ENCODE measurements at regions of chr1 and their contacts with region 1.

Region 1: GRCh38 chr1:50949286-50949982 is 10.6 kb downstream of the FAF1 start:
- DNase-seq: no peak
- ATAC-seq: no peak
- H3K4me3 ChIP-seq: no peak overlapping the region
- H3K27ac ChIP-seq: no peak overlapping the region
- H3K4me1 ChIP-seq: peaks cover 6 to 23% of the 10 kb centered on the region in 2 donors
- H3K27me3 ChIP-seq: no peaks in the 10 kb centered on the region
- CTCF ChIP-seq: no peak
- POLR2A ChIP-seq: no peak

Region 2: DNA sequence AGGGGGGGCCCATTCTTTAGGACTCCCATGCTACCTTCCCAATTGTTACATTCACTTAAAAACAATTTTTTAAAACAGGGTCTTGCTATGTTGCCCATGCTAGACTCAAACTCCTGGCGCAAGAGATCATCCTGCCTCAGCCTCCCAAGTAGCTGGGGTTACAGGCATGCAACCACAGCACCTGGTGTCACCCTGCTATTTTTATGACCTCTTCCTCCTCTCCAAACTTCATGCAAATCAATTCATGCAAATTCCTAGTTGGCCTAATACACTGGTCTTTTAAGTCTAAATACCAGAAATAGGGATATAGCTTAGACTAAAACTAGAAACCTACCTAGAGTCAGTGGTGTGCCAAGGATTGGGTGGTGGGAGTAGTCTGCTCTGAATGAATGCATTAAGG is 50.7 kb after region 1 on chr1:
- in situ Hi-C with region 1: loop called in 1 of 4 experiments (anchors 5 kb)
- intact Hi-C with region 1: no loop called
- DNase-seq: no peak
- ATAC-seq: no peak
- H3K4me3 ChIP-seq: no peak overlapping the region
- H3K27ac ChIP-seq: no peak overlapping the region
- H3K4me1 ChIP-seq: no peaks in the 10 kb centered on the region
- H3K27me3 ChIP-seq: no peaks in the 10 kb centered on the region
- CTCF ChIP-seq: no peak
- POLR2A ChIP-seq: no peak